H1 (cell line): ENCODE measurements at regions of chr10 and their contacts with region 1.

Region 1: GRCh38 chr10:70673043-70673928 is 980 bp downstream of the ADAMTS14 start:
- DNase-seq: no peak
- H3K4me3 ChIP-seq: peak overlapping the region in 3 of 4 experiments; percentile 24 to 60 (median 52); a peak in 5 of 8 replicates
- H3K27ac ChIP-seq: no peak overlapping the region
- H3K4me1 ChIP-seq: peaks cover 3 to 11% (median 3%) of the 10 kb centered on the region in 4 experiments; a peak in 6 of 7 replicates
- H3K27me3 ChIP-seq: peaks cover 0 to 25% (median 14%) of the 10 kb centered on the region in 4 experiments; a peak in 6 of 7 replicates
- CTCF ChIP-seq: no peak
- EP300 ChIP-seq: no peak
- POLR2A ChIP-seq: no peak
- RAD21 ChIP-seq: no peak

Region 2: GRCh38 chr10:70472799-70473454 is 200.4 kb before region 1 on chr10:
- CTCF ChIA-PET with region 1: no interaction called
- POLR2A ChIA-PET with region 1: no interaction called
- DNase-seq: no peak
- H3K4me3 ChIP-seq: no peak overlapping the region
- H3K27ac ChIP-seq: no peak overlapping the region
- H3K4me1 ChIP-seq: peaks cover 6% of the 10 kb centered on the region in 4 experiments
- H3K27me3 ChIP-seq: peaks cover 0 to 6% (median 1%) of the 10 kb centered on the region in 4 experiments; a peak in 3 of 7 replicates
- CTCF ChIP-seq: no peak
- EP300 ChIP-seq: no peak
- POLR2A ChIP-seq: no peak
- RAD21 ChIP-seq: no peak

Region 3: GRCh38 chr10:70652761-70653657 is 20.3 kb before region 1 on chr10:
- CTCF ChIA-PET with region 1: interaction called, 11 read pairs
- POLR2A ChIA-PET with region 1: no interaction called
- DNase-seq: no peak
- H3K4me3 ChIP-seq: no peak overlapping the region
- H3K27ac ChIP-seq: no peak overlapping the region
- H3K4me1 ChIP-seq: no peaks in the 10 kb centered on the region; a peak in 1 of 7 replicates
- H3K27me3 ChIP-seq: no peaks in the 10 kb centered on the region
- CTCF ChIP-seq: no peak
- EP300 ChIP-seq: no peak
- POLR2A ChIP-seq: no peak
- RAD21 ChIP-seq: no peak